ENCODE measurements at regions of chr5 and their contacts with region 1.

Region 1: DNA sequence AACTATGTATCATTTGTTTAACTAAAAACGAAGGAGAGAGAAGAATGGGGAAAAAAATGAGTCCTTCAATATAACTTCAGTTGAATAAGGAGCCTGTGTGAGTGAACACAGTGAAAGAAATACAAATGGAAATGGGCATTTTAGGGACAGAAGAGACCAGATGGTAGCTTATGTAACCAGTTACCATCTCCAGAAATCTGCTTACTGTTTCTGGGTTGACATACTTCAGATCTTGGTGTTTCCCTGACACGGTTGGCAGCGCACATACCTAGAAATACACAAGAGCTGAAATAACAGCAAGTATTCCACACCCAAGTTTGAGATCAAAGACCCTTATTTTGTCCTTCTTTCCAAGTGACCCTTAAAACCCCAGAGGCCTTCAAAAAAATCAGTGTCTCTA is 14.9 kb upstream of the GFRA3 start:
- DNase-seq: no peak
- H3K4me3 Mint-ChIP-seq: no peak overlapping the region
- H3K27ac Mint-ChIP-seq: no peak overlapping the region
- H3K4me1 Mint-ChIP-seq: no peaks in the 10 kb centered on the region
- H3K27me3 Mint-ChIP-seq: no peaks in the 10 kb centered on the region
- CTCF ChIP-seq: no peak

Region 2: GRCh38 chr5:138305797-138306196 is 16.5 kb after region 1 on chr5:
- CTCF ChIA-PET with region 1: interaction called, 13 read pairs
- POLR2A ChIA-PET with region 1: interaction called, 4 read pairs
- intact Hi-C with region 1: no loop called
- DNase-seq: peak; percentile 79
- H3K4me3 Mint-ChIP-seq: no peak overlapping the region
- H3K27ac Mint-ChIP-seq: peak overlapping the region; percentile 57
- H3K4me1 Mint-ChIP-seq: peaks cover 8% of the 10 kb centered on the region
- H3K27me3 Mint-ChIP-seq: no peaks in the 10 kb centered on the region
- CTCF ChIP-seq: no peak

Region 3: GRCh38 chr5:138382347-138382746 is 93.1 kb after region 1 on chr5:
- CTCF ChIA-PET with region 1: no interaction called
- POLR2A ChIA-PET with region 1: no interaction called
- intact Hi-C with region 1: no loop called
- DNase-seq: no peak
- H3K4me3 Mint-ChIP-seq: no peak overlapping the region
- H3K27ac Mint-ChIP-seq: no peak overlapping the region
- H3K4me1 Mint-ChIP-seq: no peaks in the 10 kb centered on the region
- H3K27me3 Mint-ChIP-seq: no peaks in the 10 kb centered on the region
- CTCF ChIP-seq: no peak

Region 4: DNA sequence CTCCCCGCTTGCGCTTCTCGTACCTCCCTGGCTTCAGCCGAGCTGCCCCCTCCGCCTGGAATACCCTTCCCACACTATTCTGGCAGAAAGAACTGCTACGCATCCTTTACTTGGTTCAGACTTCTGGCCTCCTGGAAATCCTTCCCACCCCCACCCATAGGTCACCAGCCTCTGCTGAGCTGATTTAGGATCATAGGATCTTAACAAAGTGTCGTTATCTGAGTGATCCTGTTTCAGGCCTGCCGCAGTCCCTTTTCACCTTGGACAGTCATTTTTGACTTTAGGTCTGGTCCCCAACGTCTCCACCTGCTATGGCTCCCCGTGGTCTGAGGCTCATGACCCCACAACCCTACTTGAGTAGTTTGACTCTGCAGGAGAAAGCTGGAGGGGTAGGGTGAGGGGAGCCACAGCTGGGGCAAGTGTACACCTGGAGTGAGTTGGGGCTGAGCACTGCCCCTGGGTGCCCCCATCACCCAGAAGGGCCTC is 203.3 kb after region 1 on chr5:
- CTCF ChIA-PET with region 1: no interaction called
- POLR2A ChIA-PET with region 1: no interaction called
- intact Hi-C with region 1: no loop called
- DNase-seq: no peak
- H3K4me3 Mint-ChIP-seq: peak overlapping the region; percentile 94
- H3K27ac Mint-ChIP-seq: peak overlapping the region; percentile 70
- H3K4me1 Mint-ChIP-seq: peaks cover 41% of the 10 kb centered on the region
- H3K27me3 Mint-ChIP-seq: no peaks in the 10 kb centered on the region
- CTCF ChIP-seq: no peak